ENCODE measurements at regions of chrX and their contacts with region 1.

Region 1: DNA sequence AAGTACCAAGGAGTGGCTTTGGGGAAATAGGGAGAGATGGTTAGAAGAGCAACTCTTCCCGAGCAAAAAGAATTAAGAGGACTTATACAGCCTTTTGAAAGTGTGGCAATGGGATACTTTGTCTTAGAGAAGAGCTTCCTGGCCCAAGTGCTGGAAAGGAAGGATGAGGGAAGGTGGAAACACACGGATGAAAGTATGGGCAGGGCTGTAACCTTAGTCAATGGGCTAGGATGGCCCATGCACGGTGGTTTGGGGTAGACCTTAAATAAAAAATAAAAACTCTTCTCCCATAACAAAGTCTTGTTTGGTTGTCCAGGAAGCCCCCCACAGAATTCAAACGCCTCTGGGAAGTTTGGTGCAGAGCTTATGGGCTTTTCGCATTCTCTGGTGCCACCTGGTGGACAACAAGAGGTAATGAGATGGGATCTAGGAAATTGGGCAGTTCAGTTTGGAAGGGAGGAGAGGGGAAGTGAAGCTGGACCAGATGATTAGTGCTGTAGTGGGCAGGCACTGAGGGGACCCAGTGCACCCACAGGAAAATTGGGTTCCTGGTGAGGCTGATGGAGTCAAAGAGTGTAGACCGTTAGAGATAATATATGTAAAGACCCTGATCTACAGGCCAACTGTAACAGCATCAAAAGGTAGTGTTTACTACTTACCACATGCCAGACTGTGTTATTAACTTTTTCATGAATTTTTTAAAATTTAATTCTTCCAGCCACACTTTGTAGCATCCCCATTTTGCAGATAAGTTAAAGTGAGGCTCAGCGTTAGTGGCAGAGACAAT is 13.8 kb upstream of the ENOX2 start:
- DNase-seq: peak; percentile 44
- ATAC-seq: no peak
- H3K4me3 Mint-ChIP-seq: no peak overlapping the region
- H3K27ac Mint-ChIP-seq: no peak overlapping the region
- H3K4me1 Mint-ChIP-seq: no peaks in the 10 kb centered on the region
- H3K27me3 Mint-ChIP-seq: peaks cover 4% of the 10 kb centered on the region

Region 2: GRCh38 chrX:129480889-129481288 is 1435.9 kb before region 1 on chrX:
- CTCF ChIA-PET with region 1: no interaction called
- POLR2A ChIA-PET with region 1: no interaction called
- intact Hi-C with region 1: no loop called
- DNase-seq: no peak
- ATAC-seq: no peak
- H3K4me3 Mint-ChIP-seq: no peak overlapping the region
- H3K27ac Mint-ChIP-seq: no peak overlapping the region
- H3K4me1 Mint-ChIP-seq: no peaks in the 10 kb centered on the region
- H3K27me3 Mint-ChIP-seq: no peaks in the 10 kb centered on the region

Region 3: GRCh38 chrX:130330706-130331105 is 586.1 kb before region 1 on chrX:
- CTCF ChIA-PET with region 1: no interaction called
- POLR2A ChIA-PET with region 1: no interaction called
- intact Hi-C with region 1: loop called in 1 of 2 experiments (anchors 1 kb)
- DNase-seq: peak; percentile 66
- ATAC-seq: peak; percentile 57
- H3K4me3 Mint-ChIP-seq: no peak overlapping the region
- H3K27ac Mint-ChIP-seq: no peak overlapping the region
- H3K4me1 Mint-ChIP-seq: no peaks in the 10 kb centered on the region
- H3K27me3 Mint-ChIP-seq: peaks cover 13% of the 10 kb centered on the region

Region 4: GRCh38 chrX:130393451-130394074 is 523.3 kb before region 1 on chrX:
- CTCF ChIA-PET with region 1: no interaction called
- POLR2A ChIA-PET with region 1: no interaction called
- intact Hi-C with region 1: loop called in 1 of 2 experiments (anchors 5 kb)
- DNase-seq: peak; percentile 22
- ATAC-seq: no peak
- H3K4me3 Mint-ChIP-seq: no peak overlapping the region
- H3K27ac Mint-ChIP-seq: no peak overlapping the region
- H3K4me1 Mint-ChIP-seq: no peaks in the 10 kb centered on the region
- H3K27me3 Mint-ChIP-seq: peaks cover 4% of the 10 kb centered on the region

Region 5: GRCh38 chrX:130401415-130402207 is 515.2 kb before region 1 on chrX and contains the start of gene RBMX2:
- CTCF ChIA-PET with region 1: no interaction called
- POLR2A ChIA-PET with region 1: no interaction called
- intact Hi-C with region 1: loop called in 1 of 2 experiments (anchors 10 kb)
- DNase-seq: peak; percentile 79
- ATAC-seq: peak; percentile 93
- H3K4me3 Mint-ChIP-seq: peak within 1 kb of the TSS; percentile 93
- H3K27ac Mint-ChIP-seq: peak within 1 kb of the TSS; percentile 92
- H3K4me1 Mint-ChIP-seq: peaks cover 13% of the 10 kb centered on the region
- H3K27me3 Mint-ChIP-seq: peaks cover under 1% of the 10 kb centered on the region
- total RNA-seq, gene RBMX2: 25.4 to 26.8 TPM

Region 6: DNA sequence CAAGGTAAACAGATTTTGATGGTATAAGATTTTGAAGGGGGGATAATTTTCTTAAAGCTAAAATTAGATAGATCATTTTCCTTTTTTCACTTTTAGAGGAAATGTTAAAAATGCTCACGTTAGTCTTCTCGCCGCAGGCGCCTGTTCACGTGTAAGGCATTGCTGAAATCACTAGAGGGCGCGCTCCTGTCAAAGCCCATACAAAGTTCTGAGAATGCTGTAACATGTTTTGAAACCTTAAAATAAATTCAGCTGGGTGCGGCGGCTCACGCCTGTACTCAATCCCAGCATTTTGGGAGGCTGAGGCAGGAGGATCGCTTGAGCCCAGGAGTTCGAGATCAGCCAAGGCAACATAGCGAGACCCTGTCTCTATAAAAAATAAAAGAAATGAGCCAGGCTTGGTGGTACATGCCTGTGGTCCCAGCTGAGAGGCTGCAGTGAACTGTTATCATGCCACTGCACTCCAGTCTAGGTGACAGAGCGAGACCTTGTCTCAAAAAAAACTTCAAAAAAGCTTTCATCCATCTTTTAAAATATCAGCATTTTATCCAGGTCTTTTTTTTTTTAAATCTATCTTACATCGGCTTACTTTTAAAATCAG is 377.0 kb before region 1 on chrX:
- CTCF ChIA-PET with region 1: interaction called, 9 read pairs
- POLR2A ChIA-PET with region 1: no interaction called
- intact Hi-C with region 1: loop called (anchors 1 kb)
- DNase-seq: peak; percentile 64
- ATAC-seq: peak; percentile 30
- H3K4me3 Mint-ChIP-seq: no peak overlapping the region
- H3K27ac Mint-ChIP-seq: no peak overlapping the region
- H3K4me1 Mint-ChIP-seq: no peaks in the 10 kb centered on the region
- H3K27me3 Mint-ChIP-seq: peaks cover 4% of the 10 kb centered on the region

Region 7: GRCh38 chrX:130575831-130576389 is 340.9 kb before region 1 on chrX:
- CTCF ChIA-PET with region 1: interaction called, 21 read pairs
- POLR2A ChIA-PET with region 1: no interaction called
- intact Hi-C with region 1: loop called (anchors 1 to 2 kb)
- DNase-seq: peak; percentile 54
- ATAC-seq: peak; percentile 55
- H3K4me3 Mint-ChIP-seq: no peak overlapping the region
- H3K27ac Mint-ChIP-seq: no peak overlapping the region
- H3K4me1 Mint-ChIP-seq: no peaks in the 10 kb centered on the region
- H3K27me3 Mint-ChIP-seq: no peaks in the 10 kb centered on the region